ENCODE measurements at regions of chr6 and their contacts with region 1.

Region 1: DNA sequence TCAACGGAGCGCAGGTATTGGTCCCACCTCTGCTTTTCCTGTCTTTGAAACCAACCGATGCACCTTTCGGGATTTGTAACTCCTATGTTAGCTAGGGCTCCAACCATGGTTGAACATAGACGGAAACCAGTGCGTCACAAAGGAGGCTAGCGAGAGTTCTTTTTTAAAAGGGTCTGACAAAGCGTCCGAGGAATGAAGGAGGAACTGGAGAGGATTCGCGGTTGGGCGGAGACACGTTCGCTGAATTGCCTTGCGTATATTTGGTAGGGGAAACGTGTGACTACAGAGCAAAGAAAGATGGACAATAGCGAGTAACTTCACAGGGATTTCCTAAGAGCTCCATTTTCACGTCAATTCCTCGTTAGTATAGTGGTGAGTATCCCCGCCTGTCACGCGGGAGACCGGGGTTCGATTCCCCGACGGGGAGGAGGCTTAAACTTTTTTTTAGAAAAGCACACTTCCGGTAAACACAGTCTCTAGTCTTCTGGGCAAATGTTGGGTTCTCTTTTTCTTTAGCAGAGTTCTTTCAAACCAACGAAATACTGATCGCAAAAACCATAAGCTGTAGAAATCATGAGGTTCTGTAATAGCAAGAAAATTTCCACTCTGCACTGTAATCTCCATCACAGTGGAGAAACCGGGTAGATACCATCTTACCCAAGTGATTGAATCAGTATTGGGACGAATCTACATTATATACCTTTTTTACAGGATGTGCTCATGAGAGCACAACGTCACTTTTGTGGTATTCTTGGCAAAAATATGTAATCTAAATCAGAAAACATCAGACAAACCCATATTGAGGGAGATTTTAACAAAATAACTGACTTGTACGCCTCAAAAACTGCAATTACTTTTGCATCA is 6.6 kb upstream of the ZNF184 start:
- DNase-seq: peak; percentile 82 to 94 (median 90)
- ATAC-seq: peak; percentile 71
- H3K4me3 ChIP-seq: peak overlapping the region; percentile 62
- H3K4me3 Mint-ChIP-seq: no peak overlapping the region
- H3K27ac ChIP-seq: peak overlapping the region; percentile 93 to 94
- H3K27ac Mint-ChIP-seq: no peak overlapping the region
- H3K4me1 ChIP-seq: peaks cover 16% of the 10 kb centered on the region
- H3K4me1 Mint-ChIP-seq: peaks cover 3% of the 10 kb centered on the region
- H3K27me3 ChIP-seq: no peaks in the 10 kb centered on the region
- H3K27me3 Mint-ChIP-seq: no peaks in the 10 kb centered on the region
- CTCF ChIP-seq: no peak

Region 2: GRCh38 chr6:26312501-26313390 is 1166.8 kb before region 1 on chr6:
- CTCF ChIA-PET with region 1: no interaction called
- POLR2A ChIA-PET with region 1: no interaction called
- intact Hi-C with region 1: loop called (anchors 5 to 10 kb)
- DNase-seq: peak; percentile 73 to 92 (median 82)
- ATAC-seq: peak; percentile 54
- H3K4me3 ChIP-seq: peak overlapping the region; percentile 69
- H3K4me3 Mint-ChIP-seq: peak overlapping the region; percentile 92
- H3K27ac ChIP-seq: peak overlapping the region in 1 of 2 donors; percentile 24
- H3K27ac Mint-ChIP-seq: peak overlapping the region; percentile 93
- H3K4me1 ChIP-seq: peaks cover 7% of the 10 kb centered on the region
- H3K4me1 Mint-ChIP-seq: peaks cover 44% of the 10 kb centered on the region
- H3K27me3 ChIP-seq: no peaks in the 10 kb centered on the region
- H3K27me3 Mint-ChIP-seq: peaks cover 30% of the 10 kb centered on the region
- CTCF ChIP-seq: no peak

Region 3: DNA sequence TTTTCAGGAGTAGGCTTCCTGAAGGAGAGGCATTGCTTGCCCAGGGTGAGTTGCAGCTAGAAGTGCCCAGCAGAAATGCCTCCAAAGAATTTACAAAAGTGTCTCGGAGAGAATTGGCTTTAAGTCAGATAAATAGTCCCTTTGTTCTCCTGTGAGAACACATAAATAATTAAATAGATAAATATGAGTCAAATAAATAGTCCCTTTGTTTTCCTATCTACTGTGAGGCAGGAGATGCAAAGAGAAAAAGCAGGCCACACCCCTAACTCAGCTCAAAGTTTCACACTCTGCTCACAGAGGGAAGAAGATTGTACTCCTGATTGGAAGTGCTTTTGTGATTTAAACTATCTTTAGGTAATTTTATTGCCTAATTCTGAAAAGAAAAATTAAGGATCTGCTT is 412.7 kb before region 1 on chr6:
- CTCF ChIA-PET with region 1: no interaction called
- POLR2A ChIA-PET with region 1: no interaction called
- intact Hi-C with region 1: no loop called
- DNase-seq: no peak
- ATAC-seq: no peak
- H3K4me3 ChIP-seq: no peak overlapping the region
- H3K4me3 Mint-ChIP-seq: no peak overlapping the region
- H3K27ac ChIP-seq: no peak overlapping the region
- H3K27ac Mint-ChIP-seq: no peak overlapping the region
- H3K4me1 ChIP-seq: no peaks in the 10 kb centered on the region
- H3K4me1 Mint-ChIP-seq: no peaks in the 10 kb centered on the region
- H3K27me3 ChIP-seq: peaks cover 0 to 3% of the 10 kb centered on the region in 2 experiments
- H3K27me3 Mint-ChIP-seq: peaks cover 42% of the 10 kb centered on the region
- CTCF ChIP-seq: no peak

Region 4: GRCh38 chr6:27312146-27312949 is 167.2 kb before region 1 on chr6 and contains the start of gene POM121L2:
- CTCF ChIA-PET with region 1: interaction called, 3 read pairs
- POLR2A ChIA-PET with region 1: interaction called, 10 read pairs
- intact Hi-C with region 1: loop called in 1 of 2 experiments (anchors 5 kb)
- DNase-seq: peak; percentile 23 to 81 (median 52)
- ATAC-seq: peak; percentile 66
- H3K4me3 ChIP-seq: peak within 1 kb of the TSS; percentile 71
- H3K4me3 Mint-ChIP-seq: peak within 1 kb of the TSS; percentile 83
- H3K27ac ChIP-seq: no peak within 1 kb of the TSS
- H3K27ac Mint-ChIP-seq: no peak within 1 kb of the TSS
- H3K4me1 ChIP-seq: peaks cover 12% of the 10 kb centered on the region
- H3K4me1 Mint-ChIP-seq: peaks cover 6% of the 10 kb centered on the region
- H3K27me3 ChIP-seq: peaks cover 35 to 68% of the 10 kb centered on the region in 2 experiments
- H3K27me3 Mint-ChIP-seq: peaks cover 93% of the 10 kb centered on the region
- CTCF ChIP-seq: peak; percentile 82
- total RNA-seq, gene POM121L2: not detected

Region 5: DNA sequence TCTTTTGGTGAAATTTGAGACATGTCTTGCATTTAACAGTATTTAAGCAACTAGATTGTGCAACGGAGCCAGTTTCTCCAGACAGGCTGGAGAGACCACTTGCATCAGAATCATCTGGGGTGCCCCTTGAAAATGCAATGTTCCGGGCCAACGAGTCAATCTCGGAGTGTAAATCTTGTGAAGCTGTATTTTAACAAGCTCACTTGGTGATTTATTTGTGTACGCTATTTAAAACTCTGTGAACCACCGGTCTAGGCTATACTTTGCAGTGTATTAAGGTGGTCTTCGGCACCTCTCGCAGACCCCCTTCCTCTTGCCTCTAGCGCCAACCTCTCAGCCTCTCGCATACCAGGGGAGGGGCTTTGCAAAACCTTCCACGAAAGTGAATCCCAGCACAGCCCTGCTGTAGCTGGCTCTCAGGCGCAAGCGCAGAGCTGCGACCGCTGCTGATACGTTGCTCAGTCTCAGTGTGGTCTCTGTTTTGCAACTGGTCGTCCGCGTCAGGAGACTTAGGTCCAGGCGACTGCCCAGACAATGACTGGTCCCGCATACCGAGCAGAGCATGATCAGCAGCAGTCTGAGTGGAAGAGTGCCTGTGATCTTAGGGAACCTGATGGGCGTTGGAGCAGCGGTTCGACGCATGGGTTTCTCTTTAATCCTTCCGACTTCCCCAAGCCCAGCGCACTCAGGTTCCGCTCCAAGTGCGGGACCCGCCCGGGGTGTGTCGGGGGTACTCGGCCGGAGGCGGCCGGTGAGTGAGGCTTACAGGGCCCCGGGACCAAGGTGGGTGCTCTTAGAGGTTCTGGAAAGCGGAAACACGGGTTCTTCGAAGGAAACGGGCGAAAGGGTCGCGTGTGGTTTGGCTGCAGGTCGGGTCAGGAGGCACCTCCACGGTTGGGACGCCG is 91.0 kb before region 1 on chr6 and contains the start of gene ZNF391:
- CTCF ChIA-PET with region 1: no interaction called
- POLR2A ChIA-PET with region 1: interaction called, 19 read pairs
- intact Hi-C with region 1: loop called (anchors 5 kb)
- DNase-seq: peak; percentile 41 to 80 (median 58)
- ATAC-seq: peak; percentile 87
- H3K4me3 ChIP-seq: peak within 1 kb of the TSS; percentile 78
- H3K4me3 Mint-ChIP-seq: peak within 1 kb of the TSS; percentile 98
- H3K27ac ChIP-seq: no peak within 1 kb of the TSS
- H3K27ac Mint-ChIP-seq: peak within 1 kb of the TSS; percentile 90
- H3K4me1 ChIP-seq: peaks cover 13% of the 10 kb centered on the region
- H3K4me1 Mint-ChIP-seq: peaks cover 24% of the 10 kb centered on the region
- H3K27me3 ChIP-seq: no peaks in the 10 kb centered on the region
- H3K27me3 Mint-ChIP-seq: peaks cover 2% of the 10 kb centered on the region
- CTCF ChIP-seq: no peak
- total RNA-seq, gene ZNF391: 1.6 to 1.8 TPM

Region 6: GRCh38 chr6:27518881-27519795 is 39.6 kb after region 1 on chr6:
- CTCF ChIA-PET with region 1: interaction called, 3 read pairs
- POLR2A ChIA-PET with region 1: interaction called, 33 read pairs
- intact Hi-C with region 1: loop called (anchors 5 kb)
- DNase-seq: peak; percentile 33 to 89 (median 54)
- ATAC-seq: peak; percentile 84
- H3K4me3 ChIP-seq: peak overlapping the region; percentile 92
- H3K4me3 Mint-ChIP-seq: peak overlapping the region; percentile 91
- H3K27ac ChIP-seq: peak overlapping the region; percentile 17 to 76
- H3K27ac Mint-ChIP-seq: peak overlapping the region; percentile 89
- H3K4me1 ChIP-seq: peaks cover 12% of the 10 kb centered on the region
- H3K4me1 Mint-ChIP-seq: peaks cover 31% of the 10 kb centered on the region
- H3K27me3 ChIP-seq: peaks cover 7% of the 10 kb centered on the region in 2 experiments
- H3K27me3 Mint-ChIP-seq: peaks cover 28% of the 10 kb centered on the region
- CTCF ChIP-seq: peak; percentile 78

Region 7: DNA sequence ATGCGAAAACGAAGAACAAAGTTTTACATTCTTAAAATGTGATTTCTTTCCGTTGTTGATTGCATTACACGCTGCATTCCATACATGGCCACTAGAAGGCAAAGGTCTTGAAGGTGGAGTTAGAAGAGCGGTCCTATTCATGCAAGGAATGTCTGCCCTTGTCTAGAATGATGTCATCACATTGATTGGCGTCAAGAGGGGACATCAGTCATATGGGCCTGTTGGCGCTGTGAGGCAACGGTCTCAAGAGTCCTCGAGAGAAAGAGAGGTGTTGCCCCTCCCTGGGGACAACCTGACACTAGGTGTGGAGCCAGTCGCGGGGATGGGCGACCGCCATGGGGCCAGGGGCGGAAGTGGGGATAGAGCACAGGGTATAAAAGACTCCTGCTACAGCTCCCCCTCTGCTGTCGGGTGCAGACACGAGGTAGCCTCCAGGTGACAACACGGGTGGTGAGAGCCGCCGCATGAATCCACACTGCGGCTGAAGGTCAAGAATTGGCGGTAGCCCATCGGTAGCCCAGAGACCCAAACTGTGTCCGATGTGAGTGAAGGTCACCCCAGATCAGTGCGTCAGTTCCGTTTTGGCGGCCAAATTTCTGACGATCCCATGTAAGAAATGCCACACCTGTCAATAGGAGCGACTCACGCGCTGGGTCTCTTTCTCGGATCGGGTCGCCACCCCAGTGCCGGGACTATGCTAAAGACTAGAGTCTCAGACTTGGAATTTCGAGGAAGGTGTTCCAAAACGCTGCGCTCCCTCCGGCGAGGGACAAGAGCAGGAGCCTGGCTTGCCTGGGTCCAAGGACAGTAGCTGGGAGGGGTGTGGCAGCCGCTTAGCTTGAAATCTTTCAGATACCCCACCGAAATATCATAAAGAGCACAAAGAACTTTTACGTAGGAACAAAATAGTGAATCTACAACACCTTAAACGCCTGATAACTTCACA is 86.5 kb after region 1 on chr6:
- CTCF ChIA-PET with region 1: no interaction called
- POLR2A ChIA-PET with region 1: no interaction called
- intact Hi-C with region 1: no loop called
- DNase-seq: no peak
- ATAC-seq: no peak
- H3K4me3 ChIP-seq: no peak overlapping the region
- H3K4me3 Mint-ChIP-seq: no peak overlapping the region
- H3K27ac ChIP-seq: no peak overlapping the region
- H3K27ac Mint-ChIP-seq: no peak overlapping the region
- H3K4me1 ChIP-seq: peaks cover 8% of the 10 kb centered on the region
- H3K4me1 Mint-ChIP-seq: peaks cover 12% of the 10 kb centered on the region
- H3K27me3 ChIP-seq: peaks cover 67 to 72% of the 10 kb centered on the region in 2 experiments
- H3K27me3 Mint-ChIP-seq: peaks cover 83% of the 10 kb centered on the region
- CTCF ChIP-seq: no peak

Region 8: GRCh38 chr6:27630727-27631608 is 151.4 kb after region 1 on chr6:
- CTCF ChIA-PET with region 1: no interaction called
- POLR2A ChIA-PET with region 1: no interaction called
- intact Hi-C with region 1: no loop called
- DNase-seq: peak in 2 of 14 experiments; percentile 8 to 16
- ATAC-seq: no peak
- H3K4me3 ChIP-seq: no peak overlapping the region
- H3K4me3 Mint-ChIP-seq: peak overlapping the region; percentile 75
- H3K27ac ChIP-seq: no peak overlapping the region
- H3K27ac Mint-ChIP-seq: peak overlapping the region; percentile 24
- H3K4me1 ChIP-seq: peaks cover 10% of the 10 kb centered on the region
- H3K4me1 Mint-ChIP-seq: peaks cover 14% of the 10 kb centered on the region
- H3K27me3 ChIP-seq: peaks cover 52 to 71% of the 10 kb centered on the region in 2 experiments
- H3K27me3 Mint-ChIP-seq: peaks cover 81% of the 10 kb centered on the region
- CTCF ChIP-seq: no peak

Region 9: DNA sequence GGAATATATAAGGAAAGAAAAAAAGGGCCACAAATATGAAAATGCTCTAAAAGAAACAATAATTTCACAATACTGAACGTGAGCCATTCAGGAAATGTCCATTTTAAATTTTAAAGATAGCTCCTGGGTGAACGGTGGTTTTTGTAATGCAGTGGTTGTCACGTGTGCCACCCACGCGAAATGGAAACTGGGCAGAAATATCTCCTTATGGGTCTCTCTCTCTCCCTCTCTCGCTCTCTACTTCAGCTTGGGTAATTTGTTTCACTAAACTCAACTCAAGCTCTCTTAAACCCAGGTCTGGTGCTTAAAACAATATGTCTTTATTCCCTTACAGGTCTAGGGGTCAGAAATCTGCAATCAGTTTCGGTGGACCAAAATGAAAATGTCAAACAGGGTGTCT is 281.8 kb after region 1 on chr6:
- CTCF ChIA-PET with region 1: no interaction called
- POLR2A ChIA-PET with region 1: interaction called, 13 read pairs
- intact Hi-C with region 1: no loop called
- DNase-seq: peak in 2 of 14 experiments; percentile 11 to 17
- ATAC-seq: peak; percentile 41
- H3K4me3 ChIP-seq: no peak overlapping the region
- H3K4me3 Mint-ChIP-seq: peak overlapping the region; percentile 94
- H3K27ac ChIP-seq: no peak overlapping the region
- H3K27ac Mint-ChIP-seq: peak overlapping the region; percentile 98
- H3K4me1 ChIP-seq: peaks cover 14% of the 10 kb centered on the region
- H3K4me1 Mint-ChIP-seq: peaks cover 40% of the 10 kb centered on the region
- H3K27me3 ChIP-seq: no peaks in the 10 kb centered on the region
- H3K27me3 Mint-ChIP-seq: peaks cover 2% of the 10 kb centered on the region
- CTCF ChIP-seq: no peak

Region 10: GRCh38 chr6:28134015-28134414 is 654.5 kb after region 1 on chr6:
- CTCF ChIA-PET with region 1: no interaction called
- POLR2A ChIA-PET with region 1: no interaction called
- intact Hi-C with region 1: no loop called
- DNase-seq: peak in 4 of 14 experiments; percentile 30 to 71 (median 52)
- ATAC-seq: no peak
- H3K4me3 ChIP-seq: no peak overlapping the region
- H3K4me3 Mint-ChIP-seq: peak overlapping the region; percentile 36
- H3K27ac ChIP-seq: no peak overlapping the region
- H3K27ac Mint-ChIP-seq: peak overlapping the region; percentile 72
- H3K4me1 ChIP-seq: peaks cover 22% of the 10 kb centered on the region
- H3K4me1 Mint-ChIP-seq: peaks cover 62% of the 10 kb centered on the region
- H3K27me3 ChIP-seq: no peaks in the 10 kb centered on the region
- H3K27me3 Mint-ChIP-seq: no peaks in the 10 kb centered on the region
- CTCF ChIP-seq: peak; percentile 32